MCF 10A (cell line): ENCODE measurements at regions of chr1 and their contacts with region 1.

Region 1: GRCh38 chr1:178542560-178543356 is 29.8 kb downstream of the TEX35 start:
- DNase-seq: peak; percentile 89
- H3K4me3 Mint-ChIP-seq: peak overlapping the region; percentile 95
- H3K27ac Mint-ChIP-seq: peak overlapping the region; percentile 80
- H3K4me1 Mint-ChIP-seq: peaks cover 35% of the 10 kb centered on the region
- H3K27me3 Mint-ChIP-seq: no peaks in the 10 kb centered on the region
- CTCF ChIP-seq: peak; percentile 100

Region 2: GRCh38 chr1:178310685-178311105 is 232.1 kb before region 1 on chr1:
- CTCF ChIA-PET with region 1: interaction called, 23 read pairs
- POLR2A ChIA-PET with region 1: interaction called, 5 read pairs
- intact Hi-C with region 1: no loop called
- DNase-seq: peak; percentile 84
- H3K4me3 Mint-ChIP-seq: no peak overlapping the region
- H3K27ac Mint-ChIP-seq: peak overlapping the region; percentile 77
- H3K4me1 Mint-ChIP-seq: peaks cover 15% of the 10 kb centered on the region
- H3K27me3 Mint-ChIP-seq: no peaks in the 10 kb centered on the region
- CTCF ChIP-seq: peak; percentile 82

Region 3: GRCh38 chr1:178552856-178553255 is 10.1 kb after region 1 on chr1:
- CTCF ChIA-PET with region 1: interaction called, 13 read pairs
- POLR2A ChIA-PET with region 1: no interaction called
- intact Hi-C with region 1: no loop called
- DNase-seq: no peak
- H3K4me3 Mint-ChIP-seq: no peak overlapping the region
- H3K27ac Mint-ChIP-seq: no peak overlapping the region
- H3K4me1 Mint-ChIP-seq: no peaks in the 10 kb centered on the region
- H3K27me3 Mint-ChIP-seq: no peaks in the 10 kb centered on the region
- CTCF ChIP-seq: no peak

Region 4: GRCh38 chr1:178607718-178608408 is 65.1 kb after region 1 on chr1:
- CTCF ChIA-PET with region 1: interaction called, 15 read pairs
- POLR2A ChIA-PET with region 1: interaction called, 3 read pairs
- intact Hi-C with region 1: loop called (anchors 2 kb)
- DNase-seq: no peak
- H3K4me3 Mint-ChIP-seq: no peak overlapping the region
- H3K27ac Mint-ChIP-seq: peak overlapping the region; percentile 88
- H3K4me1 Mint-ChIP-seq: peaks cover 30% of the 10 kb centered on the region
- H3K27me3 Mint-ChIP-seq: no peaks in the 10 kb centered on the region
- CTCF ChIP-seq: no peak

Region 5: GRCh38 chr1:178706432-178706831 is 163.7 kb after region 1 on chr1:
- CTCF ChIA-PET with region 1: interaction called, 11 read pairs
- POLR2A ChIA-PET with region 1: no interaction called
- intact Hi-C with region 1: no loop called
- DNase-seq: peak; percentile 70
- H3K4me3 Mint-ChIP-seq: no peak overlapping the region
- H3K27ac Mint-ChIP-seq: no peak overlapping the region
- H3K4me1 Mint-ChIP-seq: peaks cover 25% of the 10 kb centered on the region
- H3K27me3 Mint-ChIP-seq: no peaks in the 10 kb centered on the region
- CTCF ChIP-seq: no peak

Region 6: DNA sequence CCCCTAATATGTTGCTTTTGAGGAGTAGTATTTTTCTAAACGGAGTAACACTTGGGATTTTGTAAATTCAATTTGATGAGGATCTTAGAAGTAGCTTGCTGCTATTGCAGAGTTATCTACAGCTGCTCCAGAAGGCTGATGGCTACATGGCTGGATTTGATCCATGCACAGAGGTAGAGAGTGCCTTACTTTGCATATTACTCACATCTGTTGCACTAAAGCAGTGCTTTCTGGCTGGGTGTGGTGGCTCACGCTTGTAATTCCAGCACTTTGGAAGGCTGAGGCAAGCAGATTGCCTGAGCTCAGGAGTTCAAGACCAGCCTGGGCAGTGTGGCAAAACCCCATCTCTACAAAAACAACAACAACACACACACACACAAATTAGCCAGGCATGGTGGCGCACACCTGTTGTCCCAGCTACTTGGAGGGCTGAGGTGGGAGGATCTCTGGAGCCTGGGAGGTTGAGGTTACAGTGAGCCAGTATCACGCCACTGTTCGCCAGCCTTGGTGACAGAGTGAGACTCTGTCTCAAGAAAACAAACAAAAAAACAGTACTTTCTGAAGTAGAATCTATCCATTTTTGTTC is 206.9 kb after region 1 on chr1:
- CTCF ChIA-PET with region 1: interaction called, 390 read pairs
- POLR2A ChIA-PET with region 1: interaction called, 23 read pairs
- intact Hi-C with region 1: loop called (anchors 1 kb)
- DNase-seq: no peak
- H3K4me3 Mint-ChIP-seq: no peak overlapping the region
- H3K27ac Mint-ChIP-seq: no peak overlapping the region
- H3K4me1 Mint-ChIP-seq: peaks cover 7% of the 10 kb centered on the region
- H3K27me3 Mint-ChIP-seq: no peaks in the 10 kb centered on the region
- CTCF ChIP-seq: no peak